ENCODE measurements at regions of chr16 and their contacts with region 1.

Region 1: GRCh38 chr16:79269211-79269863 is 331.2 kb downstream of the MAF start:
- DNase-seq: peak in 2 of 3 donors; percentile 8 to 56
- H3K4me3 ChIP-seq: no peak overlapping the region
- H3K4me3 Mint-ChIP-seq: peak overlapping the region; percentile 24 to 43
- H3K27ac ChIP-seq: no peak overlapping the region
- H3K27ac Mint-ChIP-seq: peak overlapping the region in 5 of 7 donors; percentile 1 to 73 (median 45)
- H3K4me1 ChIP-seq: peaks cover 28 to 30% of the 10 kb centered on the region in 2 donors
- H3K4me1 Mint-ChIP-seq: peaks cover 37% of the 10 kb centered on the region
- H3K27me3 ChIP-seq: no peaks in the 10 kb centered on the region
- H3K27me3 Mint-ChIP-seq: peaks cover 2 to 15% (median 6%) of the 10 kb centered on the region in 3 donors
- CTCF ChIP-seq: no peak

Region 2: DNA sequence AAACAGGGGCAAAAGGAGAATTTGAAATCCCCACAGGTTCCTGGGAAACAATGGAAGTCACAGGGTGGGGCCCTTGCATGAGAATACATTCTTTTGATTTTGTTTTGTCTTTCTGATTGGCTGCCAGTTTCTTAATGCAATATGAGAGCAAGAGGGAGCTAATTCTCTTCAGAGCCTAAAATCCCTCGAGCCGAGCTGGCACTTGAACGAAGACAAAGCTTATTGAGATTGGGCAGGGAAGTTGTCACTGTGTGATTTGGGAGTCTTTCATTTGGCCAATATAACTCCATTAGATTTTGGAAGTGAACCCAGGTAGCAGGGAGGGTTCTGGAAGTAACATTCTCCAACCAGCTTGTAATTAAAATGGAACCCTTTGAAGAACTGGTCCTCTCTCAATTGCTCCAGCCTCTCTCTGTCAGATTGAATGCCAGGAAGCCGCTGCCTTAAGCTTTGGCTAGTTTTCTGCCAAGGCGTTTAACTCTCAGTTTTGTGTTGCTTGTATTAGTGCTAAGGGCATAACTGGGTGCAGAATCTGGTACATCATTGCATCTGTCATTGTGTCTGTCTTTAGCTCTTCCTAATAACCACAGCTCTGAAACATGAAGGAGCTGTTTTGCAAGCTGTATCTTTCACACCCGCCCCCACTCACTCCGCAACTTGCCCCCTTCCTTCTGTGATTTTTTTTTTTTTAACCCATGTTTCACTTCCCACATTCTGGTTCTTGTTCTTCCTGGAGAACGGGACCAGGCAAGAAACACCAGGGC is 59.2 kb after region 1 on chr16:
- intact Hi-C with region 1: loop called in 1 of 2 experiments (anchors 5 kb)
- DNase-seq: peak in 1 of 3 donors; percentile 16
- H3K4me3 ChIP-seq: peak overlapping the region; percentile 1 to 68 (median 35)
- H3K4me3 Mint-ChIP-seq: peak overlapping the region; percentile 47 to 84
- H3K27ac ChIP-seq: peak overlapping the region; percentile 54 to 86
- H3K27ac Mint-ChIP-seq: peak overlapping the region; percentile 91 to 98 (median 96)
- H3K4me1 ChIP-seq: peaks cover 47 to 49% of the 10 kb centered on the region in 2 donors
- H3K4me1 Mint-ChIP-seq: peaks cover 58% of the 10 kb centered on the region
- H3K27me3 ChIP-seq: no peaks in the 10 kb centered on the region
- H3K27me3 Mint-ChIP-seq: peaks cover 0 to 5% (median under 1%) of the 10 kb centered on the region in 3 donors
- CTCF ChIP-seq: no peak

Measured in CD14-positive monocyte (primary cell).